Tibial artery (tissue), 4 donors: ENCODE measurements at regions of chr4 and their contacts with region 1.

Region 1: DNA sequence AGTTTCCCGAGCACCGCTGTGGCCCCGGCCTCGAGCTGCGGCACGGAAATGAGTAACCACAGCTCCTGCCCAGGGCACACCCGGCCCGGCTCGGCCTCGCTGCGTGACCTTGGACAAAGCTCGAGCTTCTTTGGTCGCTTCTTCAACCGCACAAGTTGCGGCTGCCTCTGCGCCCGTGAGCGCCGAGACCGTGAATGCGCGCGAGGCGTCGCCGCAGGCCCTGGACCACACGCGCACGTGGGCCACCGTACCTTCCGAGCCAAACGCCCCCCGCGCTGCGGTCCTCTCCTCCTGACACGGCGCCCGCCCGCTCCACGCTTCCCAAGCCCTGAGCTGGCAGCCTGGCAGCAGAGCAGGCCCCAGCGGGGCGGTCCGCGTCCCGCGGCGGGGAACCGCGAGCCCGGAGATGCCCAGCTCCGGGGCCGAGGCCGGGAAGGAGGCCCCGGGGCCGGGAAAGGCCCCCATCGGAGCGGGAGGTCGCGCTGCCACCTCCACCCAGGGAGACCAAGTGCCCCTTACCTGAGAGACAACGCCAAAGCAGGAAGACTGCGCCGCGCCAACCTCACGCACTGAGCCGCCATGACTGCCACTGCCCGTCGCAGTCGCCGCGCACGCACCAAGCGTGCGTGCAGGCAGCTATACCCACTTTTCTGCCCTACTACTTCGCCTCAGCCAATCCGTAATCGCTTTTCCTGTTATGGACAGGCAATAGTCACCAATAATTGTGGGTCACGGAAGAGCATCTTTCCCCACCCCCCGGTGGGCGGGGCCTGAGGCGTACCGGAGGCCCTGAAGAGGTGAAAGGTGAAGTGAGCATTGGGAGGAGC is at the start of gene GRPEL1:
- DNase-seq: peak; percentile 100
- H3K4me3 ChIP-seq: peak within 1 kb of the TSS; percentile 67 to 90
- H3K27ac ChIP-seq: peak within 1 kb of the TSS; percentile 87 to 95
- H3K4me1 ChIP-seq: peaks cover 0 to 30% (median 23%) of the 10 kb centered on the region in 4 donors
- H3K27me3 ChIP-seq: no peaks in the 10 kb centered on the region
- CTCF ChIP-seq: no peak

Region 2: DNA sequence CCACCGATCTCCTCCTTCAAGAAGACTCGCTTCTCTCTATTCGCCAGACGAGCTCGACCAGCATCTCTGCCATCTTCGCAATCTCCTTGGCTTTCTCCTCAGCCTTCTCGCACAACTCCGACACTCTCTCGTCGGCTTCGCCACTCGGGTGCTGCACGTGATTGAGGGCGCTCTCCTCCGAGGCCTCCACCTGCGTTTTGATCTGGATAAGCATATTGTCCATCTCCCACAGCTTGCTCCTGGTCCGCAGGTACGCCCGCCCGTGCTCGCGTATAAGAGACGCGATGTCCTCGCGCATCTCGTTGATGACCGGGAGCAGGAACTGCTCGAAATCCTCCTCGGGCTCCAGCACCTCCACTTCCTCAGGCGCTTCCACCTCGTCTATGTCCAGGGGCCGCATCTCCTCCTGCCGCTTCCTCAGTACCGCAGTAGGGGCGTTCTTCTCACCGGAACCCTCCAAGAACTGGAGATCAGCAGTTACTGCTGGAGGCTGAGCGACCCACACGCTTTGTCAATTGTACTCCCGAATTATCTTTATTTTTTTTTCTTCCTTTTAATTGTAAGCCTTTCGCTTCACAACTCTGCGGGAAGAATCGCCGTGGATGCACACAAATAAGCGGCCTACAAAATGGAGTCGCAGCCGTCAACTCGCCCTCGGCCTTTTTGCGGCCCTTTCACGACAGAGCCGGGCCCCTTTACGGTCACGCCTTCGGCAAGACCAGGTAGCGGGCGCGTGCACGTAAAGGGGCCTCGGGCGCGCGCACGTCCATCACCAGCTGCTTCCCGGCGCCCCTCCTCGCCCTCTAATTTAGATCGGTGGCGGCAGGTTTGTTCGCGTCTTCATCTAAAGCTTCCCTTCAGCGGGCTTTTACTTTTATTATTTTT is 358.2 kb before region 1 on chr4 and contains the start of gene MRFAP1L1:
- intact Hi-C with region 1: loop called (anchors 10 kb)
- DNase-seq: peak; percentile 96 to 98
- H3K4me3 ChIP-seq: peak within 1 kb of the TSS; percentile 75 to 88
- H3K27ac ChIP-seq: peak within 1 kb of the TSS; percentile 82 to 85
- H3K4me1 ChIP-seq: peaks cover 5 to 40% (median 24%) of the 10 kb centered on the region in 4 donors
- H3K27me3 ChIP-seq: no peaks in the 10 kb centered on the region
- CTCF ChIP-seq: peak in 1 of 2 experiments; percentile 9

Region 3: GRCh38 chr4:6974138-6974848 is 93.4 kb before region 1 on chr4:
- intact Hi-C with region 1: loop called (anchors 5 kb)
- DNase-seq: peak; percentile 88
- H3K4me3 ChIP-seq: no peak overlapping the region
- H3K27ac ChIP-seq: no peak overlapping the region
- H3K4me1 ChIP-seq: peaks cover 0 to 6% (median 0%) of the 10 kb centered on the region in 4 donors
- H3K27me3 ChIP-seq: no peaks in the 10 kb centered on the region
- CTCF ChIP-seq: peak; percentile 96 to 97

Region 4: GRCh38 chr4:7042697-7043464 is 24.8 kb before region 1 on chr4 and contains the start of gene TADA2B:
- intact Hi-C with region 1: loop called (anchors 2 kb)
- DNase-seq: peak; percentile 96 to 99
- H3K4me3 ChIP-seq: peak within 1 kb of the TSS; percentile 96 to 100
- H3K27ac ChIP-seq: peak within 1 kb of the TSS; percentile 90 to 99
- H3K4me1 ChIP-seq: peaks cover 0 to 50% (median 41%) of the 10 kb centered on the region in 4 donors
- H3K27me3 ChIP-seq: no peaks in the 10 kb centered on the region
- CTCF ChIP-seq: peak; percentile 19 to 79